Activated CD8-positive, alpha-beta T cell treated with anti-CD3 and anti-CD28 coated beads for 36 hours (primary cell): ENCODE measurements at regions of chr3 and their contacts with region 1.

Region 1: DNA sequence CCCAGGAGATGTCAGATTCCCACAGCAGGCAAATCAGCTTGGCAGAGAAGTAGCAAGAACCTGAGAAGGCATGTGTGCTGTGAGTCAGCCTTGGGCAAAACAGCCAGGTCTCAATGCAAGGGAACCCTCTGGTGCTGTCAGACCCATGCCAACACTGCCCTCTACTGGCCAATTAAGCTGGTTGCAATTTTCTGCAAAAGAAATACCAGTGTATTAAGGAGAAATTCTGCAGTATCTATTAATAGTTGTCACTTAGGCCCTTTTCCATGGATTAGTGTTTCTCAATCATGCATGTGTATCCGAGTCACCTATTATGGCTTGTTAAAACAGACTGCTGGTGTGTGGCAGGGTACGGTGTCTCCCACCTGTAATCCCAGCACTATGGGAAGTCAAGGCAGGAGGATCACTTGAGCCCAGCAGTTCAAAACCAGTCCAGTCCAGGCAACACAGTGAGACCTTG is 26.2 kb downstream of the MAP4 start:
- DNase-seq: peak; percentile 83
- ATAC-seq: peak; percentile 98
- H3K4me3 Mint-ChIP-seq: no peak overlapping the region
- H3K27ac Mint-ChIP-seq: no peak overlapping the region
- H3K4me1 Mint-ChIP-seq: peaks cover 4% of the 10 kb centered on the region
- H3K27me3 Mint-ChIP-seq: no peaks in the 10 kb centered on the region
- CTCF ChIP-seq: peak; percentile 80

Region 2: GRCh38 chr3:47836986-47837385 is 153.0 kb before region 1 on chr3:
- CTCF ChIA-PET with region 1: interaction called, 17 read pairs
- POLR2A ChIA-PET with region 1: interaction called, 5 read pairs
- intact Hi-C with region 1: no loop called
- DNase-seq: no peak
- ATAC-seq: no peak
- H3K4me3 Mint-ChIP-seq: no peak overlapping the region
- H3K27ac Mint-ChIP-seq: no peak overlapping the region
- H3K4me1 Mint-ChIP-seq: peaks cover 3% of the 10 kb centered on the region
- H3K27me3 Mint-ChIP-seq: no peaks in the 10 kb centered on the region
- CTCF ChIP-seq: no peak

Region 3: DNA sequence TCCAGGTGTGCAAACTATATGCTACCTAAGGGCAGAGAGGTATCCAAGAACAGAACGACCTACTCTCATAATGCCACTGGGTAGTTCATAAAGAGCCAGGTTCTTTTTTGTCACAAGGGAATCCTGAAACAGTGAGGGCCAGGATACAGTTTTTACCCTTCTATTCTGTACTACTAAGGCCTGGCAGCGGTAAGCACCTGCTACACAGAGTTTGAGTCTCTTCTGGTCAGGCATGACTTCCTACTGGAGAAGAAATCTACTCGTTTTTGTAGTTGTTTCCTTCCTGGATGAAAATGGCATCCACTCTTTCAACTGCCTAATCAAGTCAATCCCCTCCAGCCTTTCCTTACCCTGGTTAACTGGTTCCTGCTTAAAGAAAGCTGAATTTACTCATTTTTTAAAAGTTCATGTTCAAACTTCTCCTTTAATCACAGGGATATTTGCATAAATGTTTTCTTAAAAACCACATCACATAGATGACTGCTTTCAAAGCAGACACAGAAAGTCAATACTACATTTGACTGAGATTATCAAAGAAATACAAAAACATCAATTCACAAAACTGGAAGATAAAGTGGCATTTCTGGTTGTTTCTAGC is 13.8 kb before region 1 on chr3:
- CTCF ChIA-PET with region 1: interaction called, 19 read pairs
- POLR2A ChIA-PET with region 1: no interaction called
- intact Hi-C with region 1: no loop called
- DNase-seq: no peak
- ATAC-seq: no peak
- H3K4me3 Mint-ChIP-seq: no peak overlapping the region
- H3K27ac Mint-ChIP-seq: no peak overlapping the region
- H3K4me1 Mint-ChIP-seq: no peaks in the 10 kb centered on the region
- H3K27me3 Mint-ChIP-seq: no peaks in the 10 kb centered on the region
- CTCF ChIP-seq: no peak

Region 4: GRCh38 chr3:48013288-48013980 is 23.4 kb after region 1 on chr3:
- CTCF ChIA-PET with region 1: interaction called, 16 read pairs
- POLR2A ChIA-PET with region 1: no interaction called
- intact Hi-C with region 1: no loop called
- DNase-seq: no peak
- ATAC-seq: peak; percentile 83
- H3K4me3 Mint-ChIP-seq: no peak overlapping the region
- H3K27ac Mint-ChIP-seq: no peak overlapping the region
- H3K4me1 Mint-ChIP-seq: peaks cover 44% of the 10 kb centered on the region
- H3K27me3 Mint-ChIP-seq: no peaks in the 10 kb centered on the region
- CTCF ChIP-seq: no peak

Region 5: GRCh38 chr3:48232734-48233133 is 242.7 kb after region 1 on chr3:
- CTCF ChIA-PET with region 1: no interaction called
- POLR2A ChIA-PET with region 1: no interaction called
- intact Hi-C with region 1: no loop called
- DNase-seq: peak; percentile 87
- ATAC-seq: peak; percentile 99
- H3K4me3 Mint-ChIP-seq: no peak overlapping the region
- H3K27ac Mint-ChIP-seq: no peak overlapping the region
- H3K4me1 Mint-ChIP-seq: no peaks in the 10 kb centered on the region
- H3K27me3 Mint-ChIP-seq: no peaks in the 10 kb centered on the region
- CTCF ChIP-seq: peak; percentile 85

Region 6: DNA sequence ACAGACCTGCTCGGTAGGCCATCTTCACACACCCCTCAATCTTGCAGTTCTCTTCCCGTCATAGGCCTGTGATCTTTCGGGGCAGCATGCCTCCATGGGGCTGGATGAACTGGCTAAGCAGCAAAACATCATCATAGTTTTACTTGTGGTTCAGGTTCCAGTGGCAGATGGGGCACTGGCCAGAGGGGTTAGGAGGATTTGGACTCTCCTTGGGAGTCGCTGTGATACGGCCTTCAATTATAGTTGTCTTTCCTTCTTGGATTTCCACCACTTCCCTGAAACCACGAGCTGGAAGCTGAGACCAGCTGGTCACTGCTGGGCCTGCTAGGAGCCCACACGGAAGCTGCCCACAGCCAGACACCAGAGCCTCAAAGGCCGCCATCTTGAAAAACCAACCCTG is 266.5 kb after region 1 on chr3:
- CTCF ChIA-PET with region 1: no interaction called
- POLR2A ChIA-PET with region 1: no interaction called
- intact Hi-C with region 1: no loop called
- DNase-seq: no peak
- ATAC-seq: no peak
- H3K4me3 Mint-ChIP-seq: no peak overlapping the region
- H3K27ac Mint-ChIP-seq: peak overlapping the region; percentile 38
- H3K4me1 Mint-ChIP-seq: peaks cover 5% of the 10 kb centered on the region
- H3K27me3 Mint-ChIP-seq: no peaks in the 10 kb centered on the region
- CTCF ChIP-seq: no peak

Region 7: DNA sequence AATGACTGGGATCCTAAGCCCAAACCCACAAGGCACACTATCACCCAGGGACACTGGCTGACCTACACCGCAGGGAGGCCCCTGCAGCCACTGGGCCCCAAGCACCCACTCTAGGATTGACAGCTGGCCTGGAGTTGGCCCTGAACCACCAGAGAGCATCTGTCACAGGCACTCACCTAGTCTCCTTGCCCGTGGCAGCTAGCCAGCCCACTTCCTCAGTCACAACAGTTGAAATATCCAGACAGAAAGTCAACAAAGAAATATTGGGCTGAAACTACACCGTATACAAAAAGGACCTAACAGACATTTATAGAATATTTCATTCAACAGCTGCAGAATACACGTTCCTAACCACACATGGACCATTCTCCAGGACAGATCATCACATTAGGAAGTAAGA is 348.6 kb after region 1 on chr3:
- CTCF ChIA-PET with region 1: no interaction called
- POLR2A ChIA-PET with region 1: no interaction called
- intact Hi-C with region 1: no loop called
- DNase-seq: no peak
- ATAC-seq: no peak
- H3K4me3 Mint-ChIP-seq: no peak overlapping the region
- H3K27ac Mint-ChIP-seq: no peak overlapping the region
- H3K4me1 Mint-ChIP-seq: no peaks in the 10 kb centered on the region
- H3K27me3 Mint-ChIP-seq: peaks cover 12% of the 10 kb centered on the region
- CTCF ChIP-seq: no peak